Endothelial cell of umbilical vein (primary cell): ENCODE measurements at regions of chr3 and their contacts with region 1.

Region 1: DNA sequence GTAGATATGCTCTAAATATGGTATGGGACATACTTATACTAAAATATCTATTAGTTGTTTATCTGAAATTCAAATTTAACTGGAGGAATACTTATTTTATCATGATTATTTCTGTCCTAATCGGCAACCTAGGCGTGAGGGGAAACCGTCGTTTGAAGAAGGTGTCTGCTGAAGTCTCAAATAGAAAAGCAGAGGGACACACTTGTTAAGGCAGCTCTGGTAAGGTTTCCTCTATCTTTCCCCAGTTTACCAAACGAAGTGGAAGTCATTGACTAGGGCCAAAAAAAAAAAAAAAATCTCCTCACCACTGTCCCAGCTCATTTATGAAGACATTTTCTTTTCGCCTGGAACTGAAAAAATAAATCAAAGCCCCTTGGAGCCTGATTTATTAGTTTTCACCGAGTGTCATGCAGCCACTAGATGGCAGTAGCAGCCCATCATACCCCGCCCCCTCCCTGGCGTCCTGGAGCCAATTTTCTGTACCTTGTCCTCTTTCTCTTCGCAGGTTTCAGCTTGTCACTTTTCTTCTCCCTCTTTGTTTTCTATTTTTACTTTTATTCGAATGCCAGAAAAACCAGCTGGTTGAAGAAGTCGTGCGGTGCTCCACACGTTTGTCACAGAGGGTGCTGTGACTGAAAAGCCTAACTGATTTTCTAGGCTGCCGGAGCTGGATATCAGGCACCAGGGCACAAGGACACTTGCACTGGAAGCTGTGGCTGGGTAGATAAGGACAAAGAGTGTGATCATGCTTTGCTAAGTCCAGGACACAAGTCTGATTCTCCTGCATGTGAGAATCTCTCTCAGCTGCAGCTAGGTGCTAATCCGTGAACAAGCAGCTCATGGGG is 238.7 kb downstream of the ZPLD1 start:
- DNase-seq: peak; percentile 53
- H3K4me3 ChIP-seq: no peak overlapping the region
- H3K27ac ChIP-seq: no peak overlapping the region
- H3K4me1 ChIP-seq: no peaks in the 10 kb centered on the region
- H3K27me3 ChIP-seq: peaks cover 0 to 3% of the 10 kb centered on the region in 2 experiments
- CTCF ChIP-seq: peak; percentile 81
- POLR2A ChIP-seq: no peak

Region 2: DNA sequence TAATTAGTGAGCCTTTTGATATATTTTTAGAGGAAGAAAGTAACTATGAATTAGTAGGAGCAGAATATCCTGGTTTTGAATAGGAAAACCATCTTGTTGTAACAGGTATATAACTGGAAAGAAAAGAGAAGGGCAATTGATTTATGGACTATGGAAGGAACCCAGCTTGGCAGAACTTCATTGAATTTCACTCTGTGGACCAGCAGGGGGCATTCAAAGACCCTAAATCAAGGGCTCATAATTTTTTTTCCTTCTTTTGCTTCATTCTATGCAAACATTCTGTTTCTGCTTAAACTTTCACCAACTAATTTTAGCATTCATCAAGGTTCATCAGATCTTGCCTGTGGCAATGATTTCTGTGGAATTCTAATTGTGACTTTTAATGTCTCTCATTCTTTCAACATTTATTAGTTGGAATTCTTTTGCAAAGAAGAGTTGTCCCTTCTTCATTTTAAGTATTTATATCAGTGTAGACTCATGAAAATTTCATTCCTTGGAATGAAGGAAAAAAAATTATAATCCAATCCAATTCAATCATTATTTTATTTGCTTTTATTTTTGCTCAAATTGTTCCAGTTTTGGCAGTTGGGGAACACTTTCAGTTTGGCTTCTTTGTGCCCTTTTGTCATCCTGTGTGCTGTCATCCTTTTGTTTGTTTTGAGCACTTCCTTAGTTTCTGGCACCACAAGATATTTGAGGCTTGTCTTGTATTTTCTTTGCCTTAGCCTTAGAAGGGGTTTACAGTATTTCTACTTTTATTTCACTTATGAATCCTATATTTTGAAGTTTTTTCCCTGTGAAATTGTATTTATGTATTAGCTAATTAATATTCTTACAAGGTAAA is 864.1 kb before region 1 on chr3:
- CTCF ChIA-PET with region 1: no interaction called
- POLR2A ChIA-PET with region 1: no interaction called
- dilution Hi-C with region 1: no loop called
- intact Hi-C with region 1: loop called (anchors 5 kb)
- DNase-seq: peak; percentile 69
- H3K4me3 ChIP-seq: no peak overlapping the region
- H3K27ac ChIP-seq: peak overlapping the region; percentile 60
- H3K4me1 ChIP-seq: peaks cover 14% of the 10 kb centered on the region
- H3K27me3 ChIP-seq: no peaks in the 10 kb centered on the region
- CTCF ChIP-seq: peak; percentile 51 to 59
- POLR2A ChIP-seq: no peak

Region 3: GRCh38 chr3:102235679-102236078 is 437.8 kb before region 1 on chr3:
- CTCF ChIA-PET with region 1: no interaction called
- POLR2A ChIA-PET with region 1: no interaction called
- dilution Hi-C with region 1: no loop called
- intact Hi-C with region 1: loop called (anchors 10 kb)
- DNase-seq: no peak
- H3K4me3 ChIP-seq: no peak overlapping the region
- H3K27ac ChIP-seq: no peak overlapping the region
- H3K4me1 ChIP-seq: no peaks in the 10 kb centered on the region
- H3K27me3 ChIP-seq: peaks cover 29 to 57% of the 10 kb centered on the region in 2 experiments
- CTCF ChIP-seq: no peak
- POLR2A ChIP-seq: no peak

Region 4: DNA sequence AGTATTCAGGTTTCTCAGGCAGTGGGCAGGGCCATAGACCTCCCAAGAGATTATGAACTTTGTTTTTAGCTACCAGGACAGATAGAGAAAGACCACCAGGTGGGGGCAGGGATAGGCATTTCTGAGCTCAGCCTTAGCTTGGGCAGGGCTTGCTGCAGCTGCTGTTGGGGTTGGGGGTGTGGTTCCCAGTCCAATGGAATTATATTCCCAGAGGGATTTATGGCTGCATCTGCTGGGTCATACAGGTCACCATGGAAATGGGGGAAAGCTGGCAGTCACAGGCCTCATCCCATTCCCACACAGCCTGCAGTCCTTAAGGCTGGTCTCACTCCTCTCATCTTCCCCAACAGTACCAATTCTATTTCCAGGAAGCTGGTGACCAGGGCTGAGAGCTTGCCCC is 383.3 kb before region 1 on chr3:
- CTCF ChIA-PET with region 1: no interaction called
- POLR2A ChIA-PET with region 1: no interaction called
- dilution Hi-C with region 1: no loop called
- intact Hi-C with region 1: no loop called
- DNase-seq: no peak
- H3K4me3 ChIP-seq: no peak overlapping the region
- H3K27ac ChIP-seq: no peak overlapping the region
- H3K4me1 ChIP-seq: no peaks in the 10 kb centered on the region
- H3K27me3 ChIP-seq: no peaks in the 10 kb centered on the region
- CTCF ChIP-seq: no peak
- POLR2A ChIP-seq: no peak

Region 5: GRCh38 chr3:102577091-102577789 is 96.3 kb before region 1 on chr3:
- CTCF ChIA-PET with region 1: no interaction called
- POLR2A ChIA-PET with region 1: no interaction called
- dilution Hi-C with region 1: no loop called
- intact Hi-C with region 1: no loop called
- DNase-seq: no peak
- H3K4me3 ChIP-seq: no peak overlapping the region
- H3K27ac ChIP-seq: no peak overlapping the region
- H3K4me1 ChIP-seq: no peaks in the 10 kb centered on the region
- H3K27me3 ChIP-seq: peaks cover 0 to 2% of the 10 kb centered on the region in 2 experiments
- CTCF ChIP-seq: no peak
- POLR2A ChIP-seq: no peak

Region 6: DNA sequence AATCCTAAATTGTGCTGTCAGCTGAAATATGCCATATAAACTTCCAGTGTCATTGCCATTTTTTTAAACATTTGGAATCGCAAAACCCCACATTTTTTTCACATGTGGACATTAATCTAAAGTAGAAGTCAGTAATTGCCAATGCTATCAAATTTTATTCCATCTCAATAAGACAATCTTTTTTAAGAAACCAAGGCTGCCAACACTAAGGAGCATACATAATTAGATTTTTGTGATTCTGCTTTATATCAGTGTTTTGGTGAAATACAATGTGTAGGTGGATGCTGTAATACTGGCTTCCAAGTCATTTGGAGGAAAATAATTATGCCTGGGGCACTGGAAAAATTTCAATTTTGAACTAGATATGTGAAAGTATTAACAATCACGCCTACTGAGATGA is 18.0 kb after region 1 on chr3:
- CTCF ChIA-PET with region 1: interaction called, 11 read pairs
- POLR2A ChIA-PET with region 1: no interaction called
- dilution Hi-C with region 1: no loop called
- intact Hi-C with region 1: no loop called
- DNase-seq: no peak
- H3K4me3 ChIP-seq: no peak overlapping the region
- H3K27ac ChIP-seq: no peak overlapping the region
- H3K4me1 ChIP-seq: no peaks in the 10 kb centered on the region
- H3K27me3 ChIP-seq: no peaks in the 10 kb centered on the region
- CTCF ChIP-seq: no peak
- POLR2A ChIP-seq: no peak

Region 7: DNA sequence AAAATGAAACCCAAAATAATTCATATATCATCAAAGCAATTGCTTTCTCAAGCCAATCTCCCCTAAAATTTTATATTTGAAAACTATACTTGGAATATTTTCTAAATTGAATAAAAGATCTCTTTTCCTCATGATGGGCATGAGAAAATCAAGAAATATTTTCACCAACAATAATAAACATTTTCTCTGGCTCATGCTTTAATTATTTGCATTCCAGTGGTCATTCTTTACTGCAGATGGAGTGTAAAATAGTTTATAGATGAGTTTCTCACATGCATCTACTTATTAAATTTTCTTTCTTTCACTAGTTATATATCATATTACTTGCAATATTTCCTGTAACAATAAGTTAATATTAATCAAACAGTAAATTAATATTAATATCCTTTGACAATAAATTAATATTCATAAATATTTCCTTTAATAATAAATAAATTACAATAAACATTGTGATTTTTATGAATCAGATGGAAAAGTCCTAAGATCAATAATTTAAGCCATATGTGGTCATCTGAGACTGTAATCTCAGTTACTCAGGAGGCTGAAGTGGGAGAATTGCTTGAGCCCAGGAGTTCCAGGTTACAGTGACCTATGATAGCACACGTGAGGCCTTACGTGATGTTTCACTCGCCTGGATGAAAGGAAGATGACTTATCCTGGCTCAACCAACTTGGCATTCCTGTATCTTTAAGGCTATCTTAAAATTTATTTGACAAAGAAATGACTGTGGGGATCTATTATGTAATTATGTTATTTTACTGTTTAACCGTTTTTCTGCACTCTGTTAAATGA is 720.1 kb after region 1 on chr3:
- CTCF ChIA-PET with region 1: no interaction called
- POLR2A ChIA-PET with region 1: no interaction called
- dilution Hi-C with region 1: no loop called
- intact Hi-C with region 1: no loop called
- DNase-seq: no peak
- H3K4me3 ChIP-seq: no peak overlapping the region
- H3K27ac ChIP-seq: no peak overlapping the region
- H3K4me1 ChIP-seq: no peaks in the 10 kb centered on the region
- H3K27me3 ChIP-seq: no peaks in the 10 kb centered on the region
- CTCF ChIP-seq: no peak
- POLR2A ChIP-seq: no peak